Dorsolateral prefrontal cortex (tissue), 120 donors: ENCODE measurements at regions of chr4 and their contacts with region 1.

Region 1: DNA sequence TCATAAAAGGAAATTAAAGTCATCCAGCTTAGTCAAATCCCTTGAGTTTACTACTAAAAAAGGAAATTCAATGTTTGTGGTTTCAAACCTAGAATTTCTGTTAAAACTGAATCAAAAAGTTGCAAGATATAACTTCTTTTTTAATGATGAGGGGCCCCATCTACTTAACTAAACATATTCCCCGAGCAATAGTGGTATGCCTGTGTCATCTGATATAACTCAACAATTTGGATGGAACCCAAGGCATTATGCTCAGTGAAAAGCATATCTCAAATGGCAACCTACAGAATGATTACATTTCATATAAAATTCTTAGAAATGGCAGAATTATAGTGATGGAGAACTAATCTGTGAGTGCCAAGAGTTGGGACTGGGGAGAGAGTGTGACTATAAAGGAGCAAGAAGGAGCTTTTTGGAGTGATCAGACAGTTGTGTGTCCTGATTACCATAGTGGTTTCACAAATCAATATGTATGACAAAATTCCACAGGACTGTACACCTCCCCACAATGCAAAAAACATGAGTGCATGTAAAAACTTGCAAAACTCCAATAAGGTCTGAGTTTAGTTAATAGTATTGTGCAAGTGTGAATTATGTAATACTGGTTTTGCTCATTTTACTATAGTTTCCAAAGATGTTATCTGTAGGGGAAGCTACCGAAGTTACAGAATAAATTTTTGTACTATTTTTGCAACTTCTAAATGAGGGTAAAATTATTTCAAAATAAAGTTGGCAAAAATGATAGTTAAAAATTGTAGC is 323.2 kb downstream of the ARHGAP24 start:
- DNase-seq: no peak
- H3K4me3 ChIP-seq: no peak overlapping the region
- H3K27ac ChIP-seq: no peak overlapping the region
- H3K27me3 ChIP-seq: no peaks in the 10 kb centered on the region
- CTCF ChIP-seq: no peak

Region 2: DNA sequence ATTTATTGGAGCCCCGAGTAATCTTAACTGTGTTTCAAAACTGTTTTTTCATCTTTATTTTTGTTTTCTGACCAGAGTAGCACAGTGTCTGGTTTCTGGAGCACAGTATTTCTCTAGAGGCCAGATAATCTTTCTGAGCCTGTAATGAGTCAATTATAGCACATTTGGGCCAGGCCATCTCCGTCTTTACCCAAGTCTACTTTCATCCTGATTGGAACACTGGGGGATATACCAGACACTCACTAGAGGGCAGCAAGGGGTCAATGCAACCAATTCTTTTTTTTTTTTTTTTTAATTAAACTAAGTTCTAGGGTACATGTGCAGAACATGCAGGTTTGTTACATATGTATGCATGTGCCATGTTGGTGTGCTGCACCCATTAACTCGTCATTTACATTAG is 41.3 kb before region 1 on chr4:
- intact Hi-C with region 1: loop called in 1 of 2 experiments (anchors 5 kb)
- DNase-seq: no peak
- H3K4me3 ChIP-seq: no peak overlapping the region
- H3K27ac ChIP-seq: no peak overlapping the region
- H3K27me3 ChIP-seq: no peaks in the 10 kb centered on the region
- CTCF ChIP-seq: peak in 33 of 56 donors; percentile 11 to 47 (median 27)

Region 3: GRCh38 chr4:85774000-85774399 is 24.2 kb before region 1 on chr4:
- intact Hi-C with region 1: no loop called
- DNase-seq: no peak
- H3K4me3 ChIP-seq: no peak overlapping the region
- H3K27ac ChIP-seq: no peak overlapping the region
- H3K27me3 ChIP-seq: no peaks in the 10 kb centered on the region
- CTCF ChIP-seq: no peak

Region 4: DNA sequence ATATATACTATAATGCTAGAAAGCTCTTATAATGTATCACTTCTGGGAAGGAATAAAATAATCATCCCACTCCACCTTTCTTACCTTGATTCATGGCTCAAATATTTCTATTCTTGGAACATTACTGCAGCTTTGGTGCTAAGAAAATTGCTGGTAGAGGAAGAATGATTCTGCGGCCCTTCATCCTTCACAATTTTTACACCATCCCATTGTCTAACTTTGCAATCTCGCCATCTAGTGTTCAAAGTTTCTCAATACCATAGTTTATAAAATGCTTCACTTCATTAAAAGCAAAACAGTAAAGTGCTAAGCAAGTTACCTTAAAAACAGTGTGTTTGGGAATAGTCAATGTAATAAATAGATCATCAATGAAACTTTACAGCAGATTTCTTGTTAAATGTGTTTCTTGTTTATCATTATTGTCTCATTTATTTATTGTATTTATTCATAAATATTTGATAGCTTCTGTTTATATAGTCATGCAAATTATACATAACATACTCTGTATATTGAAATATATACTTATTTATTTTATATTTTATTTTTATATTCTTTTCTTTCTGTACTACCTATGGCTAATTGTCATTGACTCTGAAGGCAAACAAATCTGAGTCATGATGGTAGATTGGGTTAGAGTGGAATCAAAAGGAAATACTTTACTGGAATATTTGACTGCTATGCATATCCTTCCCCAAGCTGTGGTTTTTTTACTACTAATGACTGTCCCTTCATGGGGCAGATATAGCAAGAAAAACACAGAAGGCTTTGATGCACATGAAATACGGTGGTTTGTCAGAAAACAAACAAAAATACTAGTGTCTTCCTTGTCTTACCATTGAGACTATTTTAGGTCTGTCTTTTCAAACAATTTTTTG is 171.0 kb after region 1 on chr4:
- intact Hi-C with region 1: loop called in 1 of 2 experiments (anchors 2 kb)
- DNase-seq: no peak
- H3K4me3 ChIP-seq: no peak overlapping the region
- H3K27ac ChIP-seq: no peak overlapping the region
- H3K27me3 ChIP-seq: no peaks in the 10 kb centered on the region
- CTCF ChIP-seq: peak; percentile 51 to 89 (median 71)